ENCODE measurements at regions of chr11 and their contacts with region 1.

Region 1: DNA sequence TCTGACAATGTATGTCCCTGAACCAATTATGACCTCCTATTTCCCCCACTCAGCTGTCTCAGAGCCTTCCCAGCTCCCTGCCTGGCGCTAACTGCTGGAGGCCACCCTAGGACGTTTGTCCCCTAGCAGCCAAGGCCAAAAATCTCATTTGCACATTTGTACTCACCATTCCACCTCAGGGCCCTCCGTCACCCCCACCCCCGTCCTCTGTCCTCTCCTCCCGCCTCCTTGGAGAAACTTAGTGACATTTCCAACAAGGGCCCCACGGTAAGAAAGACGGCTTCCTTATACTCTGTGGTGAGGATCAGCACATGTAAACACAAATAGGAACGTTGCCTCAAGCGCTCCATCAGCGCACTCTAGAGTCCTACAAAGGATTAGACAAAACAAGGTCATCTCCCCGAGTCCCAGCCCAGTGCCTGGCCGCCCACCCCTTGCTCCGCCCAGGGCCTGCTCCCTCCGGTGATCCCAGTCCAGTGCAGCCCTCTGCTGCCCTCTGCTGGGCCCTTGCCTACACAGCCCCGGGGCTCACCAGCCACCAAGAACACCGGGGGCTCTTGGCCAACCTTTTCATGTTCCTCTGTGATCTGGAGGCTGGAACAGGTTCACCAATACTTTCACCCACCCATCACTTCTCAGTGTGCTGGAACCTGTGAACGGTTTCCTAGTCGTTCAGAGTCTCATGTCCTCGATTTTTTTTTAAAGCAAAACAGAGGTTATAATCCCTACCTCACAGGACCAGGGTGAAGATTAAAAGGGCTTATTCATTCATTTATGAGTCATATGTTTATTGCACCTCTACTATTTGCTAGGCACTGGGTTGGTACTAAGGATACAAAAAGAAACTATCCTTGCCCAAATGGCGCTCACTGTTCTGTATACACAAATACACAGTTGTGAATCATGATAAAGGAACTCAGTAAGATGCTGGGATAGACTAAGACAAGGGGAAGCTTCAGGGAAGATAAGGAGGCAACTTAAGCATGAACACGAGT is 15.3 kb upstream of the CTR9 start:
- DNase-seq: peak; percentile 35
- ATAC-seq: peak; percentile 100
- H3K4me3 ChIP-seq: no peak overlapping the region
- H3K27ac ChIP-seq: no peak overlapping the region
- H3K4me1 ChIP-seq: peaks cover 3% of the 10 kb centered on the region; the same call in 1 of the 2 replicates
- H3K27me3 ChIP-seq: no peaks in the 10 kb centered on the region
- CTCF ChIP-seq: peak; percentile 93 to 99 (median 95)
- EP300 ChIP-seq: no peak
- POLR2A ChIP-seq: no peak
- RAD21 ChIP-seq: peak; percentile 92

Region 2: DNA sequence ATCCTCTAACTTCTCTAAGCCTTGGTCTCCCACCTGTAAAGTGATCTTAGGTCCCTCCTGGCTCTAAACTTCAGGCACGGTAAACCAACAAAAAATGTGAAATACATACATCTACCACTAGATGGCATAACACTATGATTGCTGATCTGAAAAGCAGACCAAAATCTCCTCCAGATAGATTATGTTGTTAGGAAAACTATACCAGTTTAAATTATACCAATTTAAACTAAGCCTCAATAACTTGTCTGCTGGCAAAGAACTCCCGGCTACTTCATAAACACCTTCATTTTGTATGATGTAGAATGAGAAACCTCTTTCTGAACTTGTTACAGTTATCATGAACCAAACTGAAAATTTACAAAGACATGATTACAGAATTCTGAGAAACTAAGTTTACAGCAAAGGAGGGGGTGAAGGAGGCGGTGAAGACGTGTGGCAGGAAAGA is 527.6 kb before region 1 on chr11:
- CTCF ChIA-PET with region 1: interaction called, 3 read pairs
- POLR2A ChIA-PET with region 1: no interaction called
- RAD21 ChIA-PET with region 1: no interaction called
- SMC1A ChIA-PET with region 1: no interaction called
- in situ Hi-C with region 1: loop called (anchors 10 kb)
- intact Hi-C with region 1: loop called (anchors 5 kb)
- DNase-seq: peak; percentile 32
- ATAC-seq: peak; percentile 71
- H3K4me3 ChIP-seq: no peak overlapping the region
- H3K27ac ChIP-seq: no peak overlapping the region
- H3K4me1 ChIP-seq: no peaks in the 10 kb centered on the region
- H3K27me3 ChIP-seq: peaks cover 0 to 5% of the 10 kb centered on the region in 2 experiments; a peak in 2 of 4 replicates
- CTCF ChIP-seq: peak; percentile 56 to 59 (median 56); a peak in 5 of 6 replicates
- EP300 ChIP-seq: no peak
- POLR2A ChIP-seq: no peak
- RAD21 ChIP-seq: peak; percentile 59

Region 3: DNA sequence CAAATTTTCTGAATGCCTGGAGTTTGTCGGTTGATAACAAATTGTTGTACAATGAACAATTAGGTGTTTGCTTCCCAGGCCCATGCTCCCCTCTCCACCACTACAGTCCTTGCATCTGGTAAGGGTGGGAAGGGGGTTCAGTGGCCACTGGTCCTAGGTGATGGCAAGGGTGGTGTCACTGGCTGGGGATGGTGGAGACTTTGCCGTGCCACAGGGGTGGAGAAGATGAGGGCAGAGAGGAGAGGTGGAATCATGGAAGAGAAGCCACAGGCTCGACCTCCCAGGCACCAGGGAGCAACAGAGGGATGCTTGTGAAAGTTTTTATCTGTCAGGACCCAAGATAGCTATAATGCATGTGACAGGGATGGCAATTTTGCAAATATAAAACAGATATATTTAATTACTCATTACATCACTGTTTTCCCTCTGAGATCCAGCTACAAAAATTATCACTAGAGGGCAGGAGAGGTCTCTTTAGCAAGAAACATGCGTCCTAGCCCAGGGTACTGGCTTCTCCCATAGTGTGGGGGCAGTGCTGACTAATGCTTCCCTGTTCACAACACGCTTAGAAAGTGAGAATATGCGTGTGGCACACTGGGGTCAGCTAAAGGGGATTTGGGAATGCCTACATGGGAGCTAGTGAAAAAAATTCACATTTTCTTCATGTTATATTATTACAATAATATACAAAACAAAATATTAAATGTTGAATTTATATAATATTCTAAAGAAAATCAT is 329.8 kb before region 1 on chr11:
- CTCF ChIA-PET with region 1: interaction called, 31 read pairs
- POLR2A ChIA-PET with region 1: no interaction called
- RAD21 ChIA-PET with region 1: interaction called, 12 read pairs
- SMC1A ChIA-PET with region 1: interaction called, 10 read pairs
- in situ Hi-C with region 1: loop called (anchors 5 kb)
- intact Hi-C with region 1: loop called (anchors 1 kb)
- DNase-seq: peak; percentile 4
- ATAC-seq: peak; percentile 96
- H3K4me3 ChIP-seq: no peak overlapping the region
- H3K27ac ChIP-seq: no peak overlapping the region
- H3K4me1 ChIP-seq: no peaks in the 10 kb centered on the region
- H3K27me3 ChIP-seq: no peaks in the 10 kb centered on the region; a peak in 1 of 4 replicates
- CTCF ChIP-seq: peak; percentile 65 to 77 (median 68)
- EP300 ChIP-seq: no peak
- POLR2A ChIP-seq: no peak
- RAD21 ChIP-seq: peak; percentile 85

Region 4: GRCh38 chr11:10514210-10514609 is 221.6 kb before region 1 on chr11:
- CTCF ChIA-PET with region 1: interaction called, 3 read pairs
- POLR2A ChIA-PET with region 1: no interaction called
- RAD21 ChIA-PET with region 1: no interaction called
- SMC1A ChIA-PET with region 1: no interaction called
- in situ Hi-C with region 1: no loop called
- intact Hi-C with region 1: loop called (anchors 2 kb)
- DNase-seq: no peak
- ATAC-seq: no peak
- H3K4me3 ChIP-seq: no peak overlapping the region
- H3K27ac ChIP-seq: no peak overlapping the region
- H3K4me1 ChIP-seq: no peaks in the 10 kb centered on the region
- H3K27me3 ChIP-seq: no peaks in the 10 kb centered on the region
- CTCF ChIP-seq: no peak; a peak in 1 of 6 replicates
- EP300 ChIP-seq: no peak
- POLR2A ChIP-seq: no peak
- RAD21 ChIP-seq: no peak

Region 5: DNA sequence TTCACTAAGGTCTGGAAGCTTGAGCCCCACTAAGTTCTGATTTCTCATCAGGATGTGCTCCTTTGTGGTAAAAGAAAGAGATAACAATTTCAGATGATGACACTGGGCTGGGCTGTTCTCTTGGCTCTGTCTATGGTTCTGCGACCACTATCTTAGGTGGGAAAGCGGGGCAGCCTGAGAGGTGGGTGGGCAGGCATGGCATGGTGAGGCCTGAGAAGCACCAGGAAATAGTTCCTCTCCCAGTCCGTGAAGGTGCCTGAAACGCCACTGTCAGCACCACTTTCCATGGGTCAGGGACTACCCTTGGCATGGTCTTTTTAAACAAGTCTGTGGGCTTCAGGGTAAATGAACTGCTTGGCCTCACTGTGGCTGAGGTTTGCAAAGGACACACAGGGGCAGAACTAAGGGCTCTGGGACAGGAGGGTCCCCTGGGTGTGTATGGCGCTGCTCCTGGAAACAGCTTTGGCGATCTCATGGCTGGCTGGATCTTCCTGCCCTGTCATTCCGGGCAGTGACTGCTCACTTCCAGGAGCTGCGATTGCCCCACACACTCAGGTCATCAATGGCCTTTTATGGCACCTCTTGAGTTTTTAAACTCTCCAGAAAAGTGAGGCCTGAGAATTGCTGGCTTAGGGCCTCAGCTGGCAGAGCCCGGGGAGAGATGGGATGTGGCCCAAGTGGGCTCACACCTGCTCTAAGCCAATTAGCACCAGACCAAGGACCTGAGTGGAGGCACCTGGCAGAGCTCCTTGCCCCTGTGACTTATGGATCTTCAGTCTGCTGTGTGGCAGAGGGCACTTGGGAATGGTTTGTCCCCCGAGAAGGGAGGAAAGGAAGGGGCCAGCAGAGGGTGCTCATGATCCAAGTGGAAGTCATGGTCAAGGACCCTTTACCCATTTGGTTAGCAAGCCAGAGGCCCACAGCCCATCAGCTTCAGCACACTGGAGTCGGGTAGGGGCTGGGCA is 111.7 kb before region 1 on chr11:
- CTCF ChIA-PET with region 1: interaction called, 9 read pairs
- POLR2A ChIA-PET with region 1: no interaction called
- RAD21 ChIA-PET with region 1: no interaction called
- SMC1A ChIA-PET with region 1: interaction called, 3 read pairs
- in situ Hi-C with region 1: loop called (anchors 10 kb)
- intact Hi-C with region 1: loop called (anchors 1 kb)
- DNase-seq: no peak
- ATAC-seq: peak; percentile 57
- H3K4me3 ChIP-seq: no peak overlapping the region
- H3K27ac ChIP-seq: no peak overlapping the region
- H3K4me1 ChIP-seq: no peaks in the 10 kb centered on the region
- H3K27me3 ChIP-seq: peaks cover 0 to 2% of the 10 kb centered on the region in 2 experiments; a peak in 1 of 4 replicates
- CTCF ChIP-seq: peak; percentile 56 to 63 (median 58)
- EP300 ChIP-seq: no peak
- POLR2A ChIP-seq: no peak
- RAD21 ChIP-seq: peak; percentile 69

Region 6: DNA sequence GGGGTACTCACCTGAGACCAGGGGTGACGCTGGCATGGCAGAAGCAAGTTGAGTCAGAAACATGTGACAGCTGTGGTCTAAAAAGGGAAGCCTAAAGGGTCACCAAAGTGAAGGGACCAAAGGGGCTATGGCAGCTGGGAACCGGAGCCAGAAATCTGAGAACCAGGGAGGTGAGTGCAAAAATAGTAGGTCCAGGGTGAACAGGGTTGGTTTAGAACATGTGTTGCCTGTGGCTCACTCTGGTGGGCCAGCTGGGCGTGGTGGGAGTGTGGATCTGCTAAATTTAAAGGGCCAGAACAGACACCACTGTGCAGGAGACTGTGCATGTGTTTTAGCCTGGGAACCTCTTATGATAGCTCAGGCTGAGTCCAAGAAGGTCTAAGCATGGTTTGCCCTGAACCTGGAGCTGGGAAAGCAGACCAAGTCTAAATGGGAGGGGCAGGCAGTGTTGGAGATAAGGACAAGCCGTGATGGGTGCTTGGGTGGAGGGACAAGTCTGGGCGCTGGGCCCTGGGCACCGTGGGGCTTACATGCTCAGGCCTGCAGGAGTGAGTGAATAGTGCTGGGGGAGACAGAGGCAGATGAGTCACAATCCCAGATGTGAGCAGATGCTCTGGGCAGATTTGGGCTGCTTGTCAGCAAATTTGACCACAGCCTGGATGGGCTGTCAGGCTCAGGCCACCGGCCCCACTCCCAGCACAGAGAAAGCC is 163.5 kb after region 1 on chr11:
- CTCF ChIA-PET with region 1: no interaction called
- POLR2A ChIA-PET with region 1: no interaction called
- RAD21 ChIA-PET with region 1: no interaction called
- SMC1A ChIA-PET with region 1: no interaction called
- in situ Hi-C with region 1: no loop called
- intact Hi-C with region 1: no loop called
- DNase-seq: no peak
- ATAC-seq: peak; percentile 64
- H3K4me3 ChIP-seq: no peak overlapping the region
- H3K27ac ChIP-seq: no peak overlapping the region
- H3K4me1 ChIP-seq: no peaks in the 10 kb centered on the region; the same call in 1 of the 2 replicates
- H3K27me3 ChIP-seq: no peaks in the 10 kb centered on the region
- CTCF ChIP-seq: no peak
- EP300 ChIP-seq: no peak
- POLR2A ChIP-seq: no peak
- RAD21 ChIP-seq: no peak